ENCODE measurements at regions of chrX and their contacts with region 1.

Region 1: GRCh38 chrX:153667956-153668396 is 5.6 kb downstream of the PNCK start:
- DNase-seq: peak; percentile 81
- ATAC-seq: peak; percentile 85
- H3K4me3 Mint-ChIP-seq: peak overlapping the region; percentile 73
- H3K27ac Mint-ChIP-seq: no peak overlapping the region
- H3K4me1 Mint-ChIP-seq: peaks cover 9% of the 10 kb centered on the region
- H3K27me3 Mint-ChIP-seq: peaks cover 14% of the 10 kb centered on the region

Region 2: DNA sequence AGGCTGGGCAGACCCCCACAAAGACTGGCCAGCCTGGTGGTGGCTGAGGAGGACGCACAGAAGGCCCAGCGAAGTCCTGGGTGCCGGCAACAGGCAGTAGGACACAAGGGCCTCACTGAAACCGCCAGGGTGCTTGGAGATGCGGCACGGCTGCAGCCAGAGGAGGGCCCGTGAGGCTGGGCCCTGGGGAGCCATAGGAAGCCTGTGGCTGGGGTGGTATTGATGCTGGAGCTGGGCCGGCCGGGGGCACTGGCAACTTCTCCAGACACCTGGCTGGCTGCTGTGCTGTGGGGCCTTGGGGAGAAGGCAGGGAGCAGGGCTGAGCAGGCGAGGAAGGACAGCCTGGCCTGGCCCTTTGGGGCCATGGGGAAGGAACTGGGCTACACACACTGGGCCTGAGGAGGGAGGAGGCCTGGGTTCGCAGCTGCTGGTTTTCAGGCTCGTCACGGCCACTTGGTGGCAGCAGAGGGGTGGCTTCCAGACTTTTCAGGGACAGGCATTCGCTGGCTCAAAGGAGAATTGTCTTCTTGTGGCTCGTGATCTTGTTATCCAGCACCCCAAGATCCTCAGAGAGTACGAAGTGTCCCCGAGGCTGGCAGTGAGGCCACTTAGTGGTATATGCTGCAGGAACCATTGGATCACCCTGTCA is 113.3 kb before region 1 on chrX:
- CTCF ChIA-PET with region 1: interaction called, 15 read pairs
- POLR2A ChIA-PET with region 1: no interaction called
- DNase-seq: peak; percentile 70
- ATAC-seq: peak; percentile 61
- H3K4me3 Mint-ChIP-seq: no peak overlapping the region
- H3K27ac Mint-ChIP-seq: no peak overlapping the region
- H3K4me1 Mint-ChIP-seq: peaks cover 4% of the 10 kb centered on the region
- H3K27me3 Mint-ChIP-seq: no peaks in the 10 kb centered on the region

Region 3: GRCh38 chrX:153657161-153657560 is 10.8 kb before region 1 on chrX:
- CTCF ChIA-PET with region 1: interaction called, 22 read pairs
- POLR2A ChIA-PET with region 1: no interaction called
- DNase-seq: no peak
- ATAC-seq: no peak
- H3K4me3 Mint-ChIP-seq: no peak overlapping the region
- H3K27ac Mint-ChIP-seq: no peak overlapping the region
- H3K4me1 Mint-ChIP-seq: no peaks in the 10 kb centered on the region
- H3K27me3 Mint-ChIP-seq: peaks cover 16% of the 10 kb centered on the region

Region 4: GRCh38 chrX:153684467-153685155 is 16.6 kb after region 1 on chrX:
- CTCF ChIA-PET with region 1: interaction called, 11 read pairs
- POLR2A ChIA-PET with region 1: no interaction called
- DNase-seq: no peak
- ATAC-seq: no peak
- H3K4me3 Mint-ChIP-seq: no peak overlapping the region
- H3K27ac Mint-ChIP-seq: no peak overlapping the region
- H3K4me1 Mint-ChIP-seq: no peaks in the 10 kb centered on the region
- H3K27me3 Mint-ChIP-seq: peaks cover 12% of the 10 kb centered on the region